Heart left ventricle (tissue), 16 donors: ENCODE measurements at regions of chr12 and their contacts with region 1.

Region 1: GRCh38 chr12:94336211-94336925 is 123.3 kb downstream of the CEP83 start:
- DNase-seq: no peak
- ATAC-seq: peak in 3 of 4 donors; percentile 22 to 59 (median 58)
- H3K4me3 ChIP-seq: no peak overlapping the region
- H3K27ac ChIP-seq: no peak overlapping the region
- H3K4me1 ChIP-seq: peaks cover 0 to 13% (median 0%) of the 10 kb centered on the region in 12 donors
- H3K27me3 ChIP-seq: no peaks in the 10 kb centered on the region
- CTCF ChIP-seq: no peak
- POLR2A ChIP-seq: no peak

Region 2: GRCh38 chr12:93954166-93955112 is 381.9 kb before region 1 on chr12:
- intact Hi-C with region 1: no loop called
- DNase-seq: peak in 4 of 5 donors; percentile 26 to 71 (median 58)
- ATAC-seq: peak; percentile 89 to 96 (median 96)
- H3K4me3 ChIP-seq: no peak overlapping the region
- H3K27ac ChIP-seq: peak overlapping the region in 9 of 12 donors; percentile 11 to 83 (median 48)
- H3K4me1 ChIP-seq: peaks cover 0 to 19% (median 0%) of the 10 kb centered on the region in 12 donors
- H3K27me3 ChIP-seq: no peaks in the 10 kb centered on the region
- CTCF ChIP-seq: no peak
- POLR2A ChIP-seq: no peak

Region 3: GRCh38 chr12:94379479-94380113 is 43.2 kb after region 1 on chr12:
- intact Hi-C with region 1: loop called in 1 of 10 experiments (anchors 5 kb)
- DNase-seq: no peak
- ATAC-seq: no peak
- H3K4me3 ChIP-seq: no peak overlapping the region
- H3K27ac ChIP-seq: no peak overlapping the region
- H3K4me1 ChIP-seq: peaks cover 0 to 5% (median 0%) of the 10 kb centered on the region in 12 donors
- H3K27me3 ChIP-seq: no peaks in the 10 kb centered on the region
- CTCF ChIP-seq: no peak
- POLR2A ChIP-seq: no peak

Region 4: GRCh38 chr12:94427501-94428381 is 91.4 kb after region 1 on chr12:
- intact Hi-C with region 1: loop called in 2 of 10 experiments (anchors 10 kb)
- DNase-seq: peak in 4 of 5 donors; percentile 52 to 61 (median 55)
- ATAC-seq: peak; percentile 39 to 82 (median 65)
- H3K4me3 ChIP-seq: no peak overlapping the region
- H3K27ac ChIP-seq: peak overlapping the region in 6 of 12 donors; percentile 6 to 48 (median 32)
- H3K4me1 ChIP-seq: peaks cover 0 to 23% (median 14%) of the 10 kb centered on the region in 12 donors
- H3K27me3 ChIP-seq: no peaks in the 10 kb centered on the region
- CTCF ChIP-seq: no peak
- POLR2A ChIP-seq: no peak

Region 5: GRCh38 chr12:94435511-94435927 is 99.2 kb after region 1 on chr12:
- intact Hi-C with region 1: loop called in 1 of 10 experiments (anchors 10 kb)
- DNase-seq: no peak
- ATAC-seq: peak in 3 of 4 donors; percentile 33 to 42 (median 39)
- H3K4me3 ChIP-seq: peak overlapping the region in 2 of 12 donors; percentile 11 to 18
- H3K27ac ChIP-seq: no peak overlapping the region
- H3K4me1 ChIP-seq: peaks cover 0 to 16% (median 6%) of the 10 kb centered on the region in 12 donors
- H3K27me3 ChIP-seq: no peaks in the 10 kb centered on the region
- CTCF ChIP-seq: no peak
- POLR2A ChIP-seq: no peak

Region 6: DNA sequence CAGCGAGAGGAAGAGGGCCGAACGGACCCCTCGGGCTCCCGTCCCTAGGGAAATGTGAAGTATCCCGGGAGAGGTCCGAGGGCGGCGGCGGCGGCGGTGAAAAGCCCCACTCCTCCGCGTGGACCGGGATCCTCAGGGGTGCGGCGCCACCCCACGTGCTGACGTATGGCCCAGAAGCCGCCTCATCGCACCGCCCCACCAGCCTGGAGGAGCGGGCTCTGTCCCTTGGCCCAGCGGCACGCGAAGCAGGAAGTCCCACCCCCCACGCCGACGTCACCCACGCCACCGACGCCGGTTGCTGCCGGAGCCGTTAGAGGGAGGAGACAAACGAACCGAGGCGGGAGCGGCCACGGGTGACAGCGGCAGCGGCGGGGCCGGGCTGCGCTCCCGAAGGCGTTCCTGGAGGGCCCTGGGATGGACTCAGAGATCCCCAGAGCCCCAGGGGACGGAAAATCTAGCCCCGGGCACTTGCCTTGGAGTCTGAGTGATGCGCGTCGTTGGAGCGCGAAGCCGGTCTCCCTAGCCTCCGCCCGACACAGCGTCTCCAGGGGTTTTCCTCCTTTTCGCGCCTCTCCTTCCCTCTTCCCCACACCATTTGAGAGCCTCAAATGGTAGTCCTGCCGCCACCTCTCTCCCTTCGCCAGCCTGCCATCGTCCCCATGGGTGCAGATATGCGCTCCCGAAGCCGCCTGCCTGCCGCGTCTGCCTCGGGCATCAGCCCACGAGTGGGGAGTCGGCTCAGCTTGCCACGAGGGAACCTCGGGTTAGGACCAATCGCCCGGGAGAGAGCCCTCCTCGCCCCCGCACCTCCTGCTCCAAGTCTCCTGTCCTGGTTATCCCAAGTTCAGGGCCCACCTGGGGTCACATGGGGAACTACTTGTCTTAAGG is 123.6 kb after region 1 on chr12 and contains the start of gene CEP83:
- intact Hi-C with region 1: no loop called
- DNase-seq: peak; percentile 97 to 99 (median 98)
- ATAC-seq: peak; percentile 100
- H3K4me3 ChIP-seq: peak within 1 kb of the TSS; percentile 47 to 92 (median 77)
- H3K27ac ChIP-seq: peak within 1 kb of the TSS; percentile 45 to 96 (median 88)
- H3K4me1 ChIP-seq: peaks cover 0 to 22% (median 12%) of the 10 kb centered on the region in 12 donors
- H3K27me3 ChIP-seq: no peaks in the 10 kb centered on the region
- CTCF ChIP-seq: peak in 1 of 12 donors; percentile 8
- POLR2A ChIP-seq: peak in 1 of 2 donors; percentile 92
- total RNA-seq, gene CEP83: 7.0 to 13.4 (median 9.5) TPM

Region 7: DNA sequence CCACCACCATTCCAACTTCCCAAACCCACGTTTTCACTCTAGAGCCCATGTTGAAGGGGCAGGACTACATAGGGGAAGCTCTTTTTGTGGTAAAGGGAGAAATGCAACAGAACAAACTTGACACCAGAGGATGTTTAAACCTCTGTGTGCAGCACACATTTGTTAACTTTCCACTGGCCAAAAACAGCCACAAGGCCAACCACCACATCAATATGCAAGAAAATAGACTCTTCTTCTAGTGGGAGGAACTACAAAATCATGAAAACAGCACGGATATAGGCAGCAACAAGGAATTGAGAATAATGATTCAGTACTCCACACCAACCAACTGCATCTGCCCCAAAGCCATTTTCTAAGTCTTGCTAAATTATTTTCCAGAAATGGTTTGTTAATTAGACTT is 189.6 kb after region 1 on chr12:
- intact Hi-C with region 1: loop called in 2 of 10 experiments (anchors 10 kb)
- DNase-seq: no peak
- ATAC-seq: no peak
- H3K4me3 ChIP-seq: no peak overlapping the region
- H3K27ac ChIP-seq: no peak overlapping the region
- H3K4me1 ChIP-seq: no peaks in the 10 kb centered on the region
- H3K27me3 ChIP-seq: no peaks in the 10 kb centered on the region
- CTCF ChIP-seq: no peak
- POLR2A ChIP-seq: no peak

Region 8: DNA sequence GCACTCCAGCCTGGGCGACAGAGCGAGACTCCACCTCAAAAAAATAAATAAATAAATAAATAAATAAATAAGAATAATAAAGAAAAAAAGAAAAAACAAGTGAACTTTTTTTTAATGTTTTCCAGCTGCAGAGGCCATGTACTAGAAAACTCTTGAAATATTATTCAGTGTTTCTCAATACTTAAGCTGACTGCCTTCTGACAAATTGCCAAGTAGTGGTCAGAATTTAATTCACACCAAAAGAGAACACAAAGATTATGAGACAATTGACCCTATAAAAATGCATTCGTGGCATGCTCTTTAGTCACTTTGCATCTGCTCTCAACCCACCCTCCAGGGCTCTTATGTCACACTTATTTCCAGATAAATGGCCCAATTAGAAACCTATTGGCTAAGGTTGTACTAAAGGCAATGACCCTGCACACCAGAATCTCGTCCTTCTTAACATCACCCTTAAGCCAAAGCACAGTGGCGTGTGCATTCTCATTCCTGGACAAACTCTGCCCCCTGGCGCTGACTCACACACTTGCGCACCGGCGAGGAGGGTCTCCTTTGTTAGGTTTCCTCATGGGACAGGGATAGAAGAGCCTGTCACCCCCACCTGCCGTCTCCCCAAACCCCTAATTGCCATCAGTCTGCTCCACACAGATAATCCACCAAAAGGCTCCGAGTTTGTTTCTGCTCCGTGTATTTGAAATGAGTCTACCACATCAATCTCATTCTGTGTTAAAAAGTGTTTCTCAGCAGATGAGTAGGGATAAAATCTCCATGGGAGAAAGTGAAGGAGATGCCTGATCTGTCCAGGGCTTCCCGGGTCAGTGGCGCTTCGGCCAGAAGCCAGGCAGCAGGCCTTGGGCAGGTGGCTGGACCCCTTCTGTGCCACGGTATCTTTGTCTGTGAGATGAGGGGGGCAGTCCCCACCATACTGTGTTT is 196.4 kb after region 1 on chr12:
- intact Hi-C with region 1: loop called in 2 of 10 experiments (anchors 10 kb)
- DNase-seq: peak; percentile 57 to 81 (median 62)
- ATAC-seq: peak; percentile 74 to 92 (median 86)
- H3K4me3 ChIP-seq: no peak overlapping the region
- H3K27ac ChIP-seq: no peak overlapping the region
- H3K4me1 ChIP-seq: no peaks in the 10 kb centered on the region
- H3K27me3 ChIP-seq: no peaks in the 10 kb centered on the region
- CTCF ChIP-seq: peak; percentile 61 to 85 (median 78)
- POLR2A ChIP-seq: no peak